OCI-LY7 (cell line): ENCODE measurements at regions of chr11 and their contacts with region 1.

Region 1: GRCh38 chr11:83285771-83286528 is at the start of gene CCDC90B:
- DNase-seq: peak; percentile 98
- H3K4me3 ChIP-seq: peak within 1 kb of the TSS; percentile 76
- H3K27ac ChIP-seq: peak within 1 kb of the TSS; percentile 76
- H3K4me1 ChIP-seq: peaks cover 60% of the 10 kb centered on the region
- CTCF ChIP-seq: no peak
- total RNA-seq, gene CCDC90B: 39.3 and 54.9 TPM in 2 replicates

Region 2: DNA sequence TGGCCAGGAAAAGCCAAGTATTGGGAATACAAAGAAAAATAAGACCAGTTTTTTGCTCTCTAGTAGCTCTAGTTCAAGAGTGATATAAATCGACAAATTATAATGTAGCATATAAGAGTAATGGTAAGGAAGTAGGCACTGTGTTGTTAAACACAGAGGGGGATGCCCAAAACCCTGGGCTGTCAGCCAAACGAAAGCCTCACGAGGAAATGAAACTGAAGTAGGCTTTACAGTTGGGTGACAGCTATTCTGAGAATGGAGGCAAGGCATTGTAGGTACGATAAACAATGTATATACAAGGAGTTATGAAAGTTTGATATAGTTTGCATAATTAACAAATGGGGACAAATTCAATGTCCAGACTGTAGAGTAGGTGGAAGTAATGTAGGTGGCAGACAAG is 728.7 kb before region 1 on chr11:
- CTCF ChIA-PET with region 1: no interaction called
- POLR2A ChIA-PET with region 1: no interaction called
- intact Hi-C with region 1: loop called (anchors 10 kb)
- DNase-seq: peak; percentile 74
- H3K4me3 ChIP-seq: no peak overlapping the region
- H3K27ac ChIP-seq: no peak overlapping the region
- H3K4me1 ChIP-seq: peaks cover 18% of the 10 kb centered on the region
- CTCF ChIP-seq: no peak

Region 3: GRCh38 chr11:82900277-82901164 is 385.4 kb before region 1 on chr11 and contains the start of gene PRCP:
- CTCF ChIA-PET with region 1: no interaction called
- POLR2A ChIA-PET with region 1: interaction called, 5 read pairs
- intact Hi-C with region 1: loop called (anchors 2 kb)
- DNase-seq: peak; percentile 89
- H3K4me3 ChIP-seq: peak within 1 kb of the TSS; percentile 79
- H3K27ac ChIP-seq: peak within 1 kb of the TSS; percentile 67
- H3K4me1 ChIP-seq: peaks cover 55% of the 10 kb centered on the region
- CTCF ChIP-seq: peak; percentile 48
- total RNA-seq, gene PRCP: 6.5 and 11.0 TPM in 2 replicates

Region 4: GRCh38 chr11:82969811-82970210 is 316.1 kb before region 1 on chr11:
- CTCF ChIA-PET with region 1: no interaction called
- POLR2A ChIA-PET with region 1: no interaction called
- intact Hi-C with region 1: loop called (anchors 2 kb)
- DNase-seq: peak; percentile 94
- H3K4me3 ChIP-seq: peak overlapping the region; percentile 33
- H3K27ac ChIP-seq: peak overlapping the region; percentile 98
- H3K4me1 ChIP-seq: peaks cover 88% of the 10 kb centered on the region
- CTCF ChIP-seq: no peak

Region 5: DNA sequence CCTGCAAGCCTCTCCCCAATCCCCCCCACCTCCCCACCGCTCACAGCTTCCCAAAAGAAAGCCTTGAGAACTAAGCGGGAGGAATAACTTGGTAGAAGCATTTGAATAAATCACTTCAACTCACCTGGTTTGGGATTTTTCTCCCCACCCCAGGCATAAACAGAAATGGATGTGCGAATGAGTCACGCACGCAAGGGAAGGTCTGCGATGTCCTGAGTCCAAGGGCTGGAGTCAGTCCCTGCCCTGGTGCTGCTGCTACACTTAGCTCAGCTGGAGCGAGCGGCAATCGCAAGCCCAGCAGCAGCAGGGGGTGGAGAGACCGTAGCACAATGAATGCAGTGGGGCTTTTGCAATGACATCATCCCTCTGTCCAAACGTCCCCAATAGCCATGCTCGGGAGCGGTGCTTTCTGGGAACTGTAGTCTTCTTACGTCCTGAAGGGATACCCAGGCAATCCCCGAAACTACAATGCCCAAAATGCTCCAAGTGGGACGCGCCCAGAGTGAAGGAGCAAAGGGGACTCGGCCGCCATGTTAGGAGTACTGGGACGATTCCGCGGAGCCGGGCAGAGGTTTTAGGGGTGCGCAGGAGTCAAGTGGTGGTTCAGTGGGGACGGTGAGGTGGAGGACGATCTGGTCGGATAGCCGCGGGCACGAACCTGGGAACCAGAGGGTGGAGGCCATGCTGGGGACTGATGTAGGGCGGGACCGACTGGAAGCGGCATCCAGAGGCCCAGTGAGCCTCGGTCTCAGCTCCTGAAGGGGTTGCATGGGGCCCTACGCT is 214.2 kb before region 1 on chr11 and contains the start of gene RAB30:
- CTCF ChIA-PET with region 1: no interaction called
- POLR2A ChIA-PET with region 1: no interaction called
- intact Hi-C with region 1: loop called (anchors 5 kb)
- DNase-seq: peak; percentile 99
- H3K4me3 ChIP-seq: peak within 1 kb of the TSS; percentile 86
- H3K27ac ChIP-seq: peak within 1 kb of the TSS; percentile 70
- H3K4me1 ChIP-seq: peaks cover 40% of the 10 kb centered on the region
- CTCF ChIP-seq: no peak
- total RNA-seq, gene RAB30: 27.1 and 33.3 TPM in 2 replicates

Region 6: GRCh38 chr11:83115551-83115950 is 170.4 kb before region 1 on chr11:
- CTCF ChIA-PET with region 1: no interaction called
- POLR2A ChIA-PET with region 1: no interaction called
- intact Hi-C with region 1: no loop called
- DNase-seq: no peak
- H3K4me3 ChIP-seq: no peak overlapping the region
- H3K27ac ChIP-seq: no peak overlapping the region
- H3K4me1 ChIP-seq: peaks cover 40% of the 10 kb centered on the region
- CTCF ChIP-seq: no peak

Region 7: GRCh38 chr11:83299681-83300080 is 13.7 kb after region 1 on chr11:
- CTCF ChIA-PET with region 1: no interaction called
- POLR2A ChIA-PET with region 1: no interaction called
- intact Hi-C with region 1: no loop called
- DNase-seq: no peak
- H3K4me3 ChIP-seq: no peak overlapping the region
- H3K27ac ChIP-seq: no peak overlapping the region
- H3K4me1 ChIP-seq: no peaks in the 10 kb centered on the region
- CTCF ChIP-seq: no peak

Region 8: DNA sequence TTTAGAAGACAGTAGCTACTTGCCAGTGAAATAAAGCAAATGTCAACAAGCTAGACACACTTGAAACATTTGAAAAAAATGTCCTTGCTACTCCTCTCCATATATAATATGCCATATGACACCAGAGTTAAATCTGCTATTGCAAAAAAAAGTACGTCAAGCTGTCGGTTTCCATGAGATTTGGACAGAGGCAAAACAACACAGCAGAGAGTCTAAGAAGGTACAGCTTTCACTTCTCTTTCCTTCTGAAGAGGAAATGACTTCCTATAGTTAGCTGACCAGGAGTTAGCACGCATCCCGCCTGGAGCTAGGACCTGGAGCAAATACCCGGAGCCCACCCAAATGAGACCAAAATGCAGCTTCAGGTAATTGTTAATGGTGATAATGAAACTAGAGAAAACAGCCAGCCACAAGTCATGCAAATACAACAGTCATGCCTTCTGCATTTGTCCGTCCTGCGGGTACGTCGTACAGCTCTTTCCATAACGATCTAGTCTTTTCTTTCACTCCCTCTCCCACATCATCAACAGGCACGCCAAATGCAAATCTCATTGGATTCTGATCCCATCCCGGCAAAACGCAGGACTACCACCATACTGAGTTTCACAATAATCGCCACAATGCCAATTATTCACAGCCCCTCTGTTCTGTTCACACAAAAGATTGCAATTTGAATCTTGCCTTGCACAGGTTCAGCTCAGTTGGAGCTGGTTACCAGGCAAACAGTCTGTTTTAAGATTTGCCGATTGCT is 395.3 kb after region 1 on chr11:
- CTCF ChIA-PET with region 1: interaction called, 3 read pairs
- POLR2A ChIA-PET with region 1: interaction called, 3 read pairs
- intact Hi-C with region 1: loop called (anchors 2 kb)
- DNase-seq: peak; percentile 7
- H3K4me3 ChIP-seq: peak overlapping the region; percentile 59
- H3K27ac ChIP-seq: no peak overlapping the region
- H3K4me1 ChIP-seq: peaks cover 30% of the 10 kb centered on the region
- CTCF ChIP-seq: no peak